Psoas muscle (tissue), 8 donors: ENCODE measurements at regions of chr3 and their contacts with region 1.

Region 1: GRCh38 chr3:129439817-129440617 is at the starts of genes IFT122 and MBD4:
- DNase-seq: peak; percentile 98 to 99
- ATAC-seq: peak; percentile 95 to 97 (median 96)
- H3K4me3 ChIP-seq: peak within 1 kb of the TSS; percentile 95
- H3K27ac ChIP-seq: peak within 1 kb of the TSS; percentile 91
- H3K4me1 ChIP-seq: peaks cover 46% of the 10 kb centered on the region
- H3K27me3 ChIP-seq: no peaks in the 10 kb centered on the region
- CTCF ChIP-seq: no peak
- total RNA-seq, gene IFT122: 4.5 to 7.3 (median 5.7) TPM
- total RNA-seq, gene MBD4: 16.0 to 23.1 (median 19.9) TPM

Region 2: DNA sequence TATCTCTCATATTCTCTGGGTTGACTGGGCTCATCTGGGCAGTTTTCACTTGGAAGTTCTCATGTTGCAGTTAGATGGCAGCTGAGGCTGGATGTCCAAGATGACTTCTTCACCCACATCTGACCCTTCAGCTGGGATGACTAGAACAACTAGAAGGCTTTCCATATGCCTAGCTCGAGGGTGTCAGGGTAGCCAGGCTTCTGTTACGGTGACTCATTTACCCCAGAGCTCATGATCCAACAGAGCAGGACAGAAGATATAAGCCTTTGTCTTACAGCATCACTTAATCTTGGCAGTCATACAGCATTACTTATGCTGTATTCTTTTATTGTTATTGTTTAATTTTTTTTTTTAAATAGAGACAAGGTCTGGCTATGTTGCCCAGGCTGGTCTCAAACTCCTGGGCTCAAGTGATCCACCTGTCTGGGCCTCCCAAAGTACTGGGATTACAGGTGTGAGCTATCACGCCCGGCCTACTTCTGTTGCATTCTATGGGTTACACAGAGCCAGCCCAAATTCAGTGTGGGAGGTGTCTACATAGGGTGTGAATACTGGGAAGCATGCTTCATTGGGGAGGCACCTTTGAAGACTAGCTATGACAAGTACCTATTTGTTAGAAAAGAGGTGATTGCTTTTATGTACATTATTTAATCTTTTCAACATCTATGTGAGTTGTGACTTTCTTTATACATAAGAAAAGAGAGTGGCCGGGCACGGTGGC is 150.7 kb before region 1 on chr3:
- intact Hi-C with region 1: no loop called
- DNase-seq: no peak
- ATAC-seq: peak in 1 of 4 donors; percentile 19
- H3K4me3 ChIP-seq: no peak overlapping the region
- H3K27ac ChIP-seq: no peak overlapping the region
- H3K4me1 ChIP-seq: peaks cover 5% of the 10 kb centered on the region
- H3K27me3 ChIP-seq: no peaks in the 10 kb centered on the region
- CTCF ChIP-seq: no peak

Region 3: DNA sequence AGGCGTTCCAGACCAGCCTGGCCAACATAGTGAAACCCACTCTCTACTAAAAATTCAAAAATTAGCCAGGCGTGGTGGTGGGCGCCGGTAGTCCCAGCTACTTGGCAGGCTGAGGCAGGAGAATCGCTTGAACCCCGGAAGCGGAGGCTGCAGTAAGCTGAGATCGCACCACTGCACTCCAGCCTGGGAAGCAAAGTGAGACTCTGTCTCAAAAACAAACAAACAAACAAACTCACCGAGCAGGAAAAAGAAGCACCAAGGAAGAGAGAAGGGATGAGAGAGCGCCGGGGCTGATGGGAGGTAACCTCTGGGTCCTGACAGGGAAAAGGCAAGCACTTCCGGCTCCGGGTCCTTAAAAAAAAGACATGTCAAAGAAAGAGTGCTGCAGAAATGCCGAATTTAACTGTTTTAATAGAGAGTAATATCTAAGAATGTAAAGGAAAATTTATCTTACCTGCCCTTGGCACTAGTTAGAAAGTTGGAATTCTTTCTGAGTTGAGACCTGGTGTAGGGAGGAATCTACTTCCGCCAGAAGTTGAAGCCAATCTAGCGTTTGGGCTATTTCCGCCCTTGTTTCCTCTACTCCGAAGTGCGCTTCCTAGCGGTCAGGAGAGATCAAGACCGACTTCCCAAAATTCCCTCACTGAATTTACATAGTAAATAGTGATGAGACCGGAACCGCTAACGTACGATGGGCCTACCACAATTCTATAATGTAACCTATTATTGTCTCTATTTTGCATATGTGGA is 40.7 kb before region 1 on chr3:
- intact Hi-C with region 1: no loop called
- DNase-seq: peak; percentile 71 to 79
- ATAC-seq: peak; percentile 92 to 98 (median 94)
- H3K4me3 ChIP-seq: peak overlapping the region; percentile 92
- H3K27ac ChIP-seq: peak overlapping the region; percentile 94
- H3K4me1 ChIP-seq: peaks cover 12% of the 10 kb centered on the region
- H3K27me3 ChIP-seq: no peaks in the 10 kb centered on the region
- CTCF ChIP-seq: peak; percentile 91

Region 4: DNA sequence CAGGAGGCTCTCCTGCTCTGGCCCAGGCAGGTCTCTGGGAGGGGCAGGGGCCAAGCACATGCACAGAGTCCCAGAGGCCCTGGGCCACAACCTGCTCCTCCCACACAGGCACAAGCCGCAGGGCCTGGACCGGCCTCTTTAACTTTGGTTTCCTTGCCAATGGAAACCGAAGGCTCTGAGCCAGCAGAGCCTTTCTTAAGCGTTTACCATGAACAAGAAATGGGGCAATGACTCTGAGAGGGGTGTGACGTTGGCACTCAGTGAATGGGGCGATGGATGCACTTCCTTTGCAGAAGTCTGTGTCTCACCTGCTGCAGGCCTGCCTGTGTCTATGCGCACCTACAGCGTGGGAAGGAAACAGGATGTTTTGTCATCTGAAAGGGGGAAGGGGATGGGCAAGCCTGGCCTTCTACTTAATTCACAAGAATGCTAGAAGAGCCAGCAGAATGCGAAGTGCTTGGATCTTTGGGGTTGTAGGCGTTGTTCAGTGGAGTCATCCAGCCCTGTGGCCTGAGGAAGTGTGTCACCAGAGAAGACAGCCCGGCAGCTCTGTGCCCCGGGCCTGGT is 41.8 kb after region 1 on chr3:
- intact Hi-C with region 1: loop called in 1 of 2 experiments (anchors 5 kb)
- DNase-seq: peak; percentile 63 to 76
- ATAC-seq: peak in 2 of 4 donors; percentile 18 to 26
- H3K4me3 ChIP-seq: no peak overlapping the region
- H3K27ac ChIP-seq: peak overlapping the region; percentile 50
- H3K4me1 ChIP-seq: peaks cover 14% of the 10 kb centered on the region
- H3K27me3 ChIP-seq: no peaks in the 10 kb centered on the region
- CTCF ChIP-seq: no peak